Astrocyte of the cerebellum (primary cell): ENCODE measurements at regions of chr5 and their contacts with region 1.

Region 1: DNA sequence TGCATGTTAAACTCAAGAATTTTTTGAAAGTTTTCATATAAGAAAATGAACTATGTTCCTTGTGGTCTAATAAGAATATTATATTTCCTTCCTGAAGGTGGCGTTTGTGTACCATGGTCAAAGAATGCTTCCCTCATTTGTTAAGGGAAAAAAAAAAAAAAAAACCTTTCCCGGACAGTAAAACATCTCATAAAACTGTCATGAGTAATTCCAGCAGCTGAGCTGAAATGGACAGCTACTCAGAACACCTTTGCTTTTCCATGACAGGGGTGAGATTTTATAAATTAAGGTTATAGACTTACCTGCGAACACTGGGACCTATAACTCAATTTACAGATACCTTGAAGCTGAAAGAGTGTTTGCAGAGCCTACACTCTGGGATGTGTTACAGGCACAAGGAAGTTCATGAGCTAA is 113.2 kb upstream of the RANBP3L start:
- DNase-seq: peak; percentile 61
- H3K4me3 ChIP-seq: no peak overlapping the region
- CTCF ChIP-seq: peak; percentile 37

Region 2: DNA sequence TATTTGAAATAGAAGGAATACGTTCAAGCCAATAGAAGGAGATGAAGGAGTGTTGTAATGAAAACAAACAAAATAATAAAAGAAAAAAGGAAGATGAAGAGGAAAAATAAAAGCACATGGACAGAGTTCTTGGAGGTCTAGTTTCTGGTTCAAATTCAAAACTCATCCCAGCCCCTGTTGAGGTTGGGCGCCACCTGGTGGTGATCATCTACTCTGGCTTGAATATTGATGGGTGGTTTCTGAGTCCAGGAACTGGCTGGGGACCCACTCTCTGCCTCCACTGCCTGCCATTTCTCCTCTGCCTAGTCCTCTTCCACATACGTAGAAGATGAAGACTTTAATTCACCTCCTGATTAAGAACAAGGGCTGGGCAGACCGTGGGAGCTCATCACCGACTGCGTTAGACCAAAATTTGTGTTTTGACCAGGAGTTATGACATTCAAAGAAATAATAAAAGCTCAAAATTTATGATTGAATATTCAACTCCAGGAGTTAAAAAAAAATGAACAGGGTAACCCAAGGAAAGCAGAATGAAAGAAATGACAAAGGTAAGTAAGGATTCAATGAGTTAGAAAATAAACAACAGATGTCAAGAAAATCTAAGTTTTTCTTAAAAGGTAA is 92.6 kb after region 1 on chr5:
- in situ Hi-C with region 1: loop called (anchors 25 kb)
- DNase-seq: peak; percentile 63
- H3K4me3 ChIP-seq: no peak overlapping the region
- CTCF ChIP-seq: peak; percentile 82

Region 3: DNA sequence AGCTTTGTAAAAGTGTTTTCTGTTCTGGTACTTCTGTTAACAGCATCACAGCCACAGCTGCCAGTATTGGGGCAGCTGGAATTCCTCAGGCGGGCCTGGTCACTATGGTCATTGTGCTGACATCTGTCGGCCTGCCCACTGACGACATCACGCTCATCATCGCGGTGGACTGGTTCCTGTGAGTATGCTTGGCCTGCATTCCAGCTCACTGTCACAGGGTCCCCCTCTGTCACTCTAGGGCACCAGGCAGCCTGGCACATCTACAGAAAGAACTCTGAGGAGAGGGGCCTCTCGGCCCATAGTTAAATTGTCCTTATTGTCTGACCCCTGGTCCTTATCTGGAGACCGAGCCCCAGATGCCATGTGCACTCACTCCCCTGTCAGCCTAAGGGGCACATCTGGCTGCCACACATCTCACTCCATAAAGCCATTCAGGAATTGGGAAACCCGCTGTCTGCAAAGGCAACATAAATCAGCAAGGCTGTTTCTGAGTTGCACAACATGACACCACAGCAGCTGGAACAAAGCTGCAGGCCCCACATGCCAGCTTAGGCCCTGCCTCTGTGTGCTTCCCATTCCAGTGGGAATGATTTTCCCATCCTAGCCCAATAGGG is 269.1 kb after region 1 on chr5:
- in situ Hi-C with region 1: no loop called
- DNase-seq: no peak
- H3K4me3 ChIP-seq: no peak overlapping the region
- CTCF ChIP-seq: no peak

Region 4: DNA sequence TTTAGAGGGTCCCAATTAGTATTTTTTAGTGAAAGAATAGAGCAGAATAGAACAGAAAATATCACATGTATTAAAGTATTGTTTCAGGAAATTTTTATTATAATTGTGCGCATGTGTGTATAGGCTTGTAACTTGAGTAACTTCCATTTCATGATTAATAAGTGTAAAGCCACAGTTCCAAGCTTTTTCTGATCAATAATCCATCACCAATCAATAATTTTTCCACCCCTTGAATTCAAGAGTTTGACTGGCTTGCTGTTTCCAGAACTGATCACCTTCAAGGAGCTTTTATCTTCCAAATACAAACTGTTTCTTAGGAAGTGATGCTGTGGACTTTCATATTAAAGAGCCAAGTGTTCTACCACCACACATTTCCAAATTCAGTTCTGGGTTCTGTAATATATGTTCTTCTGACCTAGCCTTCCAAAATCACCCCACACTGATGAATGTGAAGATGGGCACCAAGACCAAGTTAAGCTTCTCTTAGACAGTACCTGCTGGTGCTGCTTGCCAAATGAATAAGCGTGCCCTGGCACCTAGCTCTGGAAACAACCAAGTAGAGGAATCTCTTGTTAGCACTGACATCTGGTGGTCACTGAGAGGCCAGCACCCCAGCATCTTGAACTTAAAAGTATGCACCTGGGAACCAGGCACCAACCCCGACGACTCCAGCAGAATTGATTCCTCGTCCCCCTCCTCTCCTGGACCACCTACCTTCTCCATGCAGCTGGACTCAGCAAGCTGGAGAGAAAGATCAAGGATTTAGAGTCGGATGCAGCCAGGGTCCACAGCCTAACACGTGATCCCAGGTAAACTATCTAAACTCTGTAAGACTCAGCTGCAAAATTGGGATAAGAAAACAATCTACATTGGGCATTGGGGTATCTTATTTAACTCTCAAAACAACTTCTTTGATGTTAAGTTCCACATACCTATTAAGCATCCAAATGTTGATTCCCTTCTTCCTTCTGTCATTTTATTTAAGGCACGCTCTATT is 281.1 kb after region 1 on chr5:
- in situ Hi-C with region 1: loop called (anchors 5 kb)
- DNase-seq: peak; percentile 61
- H3K4me3 ChIP-seq: no peak overlapping the region
- CTCF ChIP-seq: peak; percentile 91